ENCODE measurements at regions of chr7 and their contacts with region 1.

Region 1: GRCh38 chr7:37448636-37449361 is at the start of gene ELMO1:
- DNase-seq: peak; percentile 61 to 88 (median 84)
- H3K4me3 ChIP-seq: peak within 1 kb of the TSS; percentile 65
- H3K4me3 Mint-ChIP-seq: peak within 1 kb of the TSS; percentile 92 to 99 (median 98)
- H3K27ac ChIP-seq: peak within 1 kb of the TSS; percentile 80
- H3K27ac Mint-ChIP-seq: peak within 1 kb of the TSS; percentile 96 to 100 (median 98)
- H3K4me1 ChIP-seq: peaks cover 31% of the 10 kb centered on the region
- H3K4me1 Mint-ChIP-seq: peaks cover 49 to 65% (median 50%) of the 10 kb centered on the region in 3 donors
- H3K27me3 ChIP-seq: no peaks in the 10 kb centered on the region
- H3K27me3 Mint-ChIP-seq: peaks cover 0 to 6% of the 10 kb centered on the region in 2 donors
- total RNA-seq, gene ELMO1: 66.2 to 74.4 TPM

Region 2: GRCh38 chr7:37284805-37285231 is 164.0 kb before region 1 on chr7:
- CTCF ChIA-PET with region 1: interaction called, 18 read pairs
- POLR2A ChIA-PET with region 1: interaction called, 6 read pairs
- DNase-seq: peak; percentile 13 to 56 (median 17)
- H3K4me3 ChIP-seq: no peak overlapping the region
- H3K4me3 Mint-ChIP-seq: no peak overlapping the region
- H3K27ac ChIP-seq: no peak overlapping the region
- H3K27ac Mint-ChIP-seq: peak overlapping the region in 7 of 8 donors; percentile 23 to 61 (median 40)
- H3K4me1 ChIP-seq: peaks cover 13% of the 10 kb centered on the region
- H3K4me1 Mint-ChIP-seq: peaks cover 39 to 60% (median 53%) of the 10 kb centered on the region in 3 donors
- H3K27me3 ChIP-seq: no peaks in the 10 kb centered on the region
- H3K27me3 Mint-ChIP-seq: peaks cover 0 to 3% of the 10 kb centered on the region in 2 donors

Region 3: DNA sequence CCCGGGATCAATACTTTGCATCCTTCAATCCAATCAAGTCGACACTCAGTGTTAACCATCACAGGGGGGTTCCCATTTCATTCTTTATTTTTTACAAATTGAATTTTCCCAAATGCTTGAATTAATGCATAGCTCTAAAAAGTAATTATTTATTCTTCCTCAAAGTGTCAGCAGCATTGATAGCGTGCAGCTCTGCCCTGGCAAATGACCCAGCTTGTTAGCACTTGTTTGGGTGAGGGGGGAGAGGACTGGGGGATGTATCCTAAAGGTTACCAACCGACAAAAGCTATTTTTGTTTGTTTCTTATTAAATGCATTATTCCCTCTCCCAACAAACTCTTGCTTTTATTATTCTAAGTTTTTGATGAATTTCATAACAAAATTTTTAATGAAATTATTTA is 26.8 kb after region 1 on chr7:
- CTCF ChIA-PET with region 1: interaction called, 4 read pairs
- POLR2A ChIA-PET with region 1: interaction called, 23 read pairs
- DNase-seq: no peak
- H3K4me3 ChIP-seq: no peak overlapping the region
- H3K4me3 Mint-ChIP-seq: no peak overlapping the region
- H3K27ac ChIP-seq: no peak overlapping the region
- H3K27ac Mint-ChIP-seq: peak overlapping the region in 1 of 8 donors; percentile 31
- H3K4me1 ChIP-seq: no peaks in the 10 kb centered on the region
- H3K4me1 Mint-ChIP-seq: no peaks in the 10 kb centered on the region
- H3K27me3 ChIP-seq: no peaks in the 10 kb centered on the region
- H3K27me3 Mint-ChIP-seq: peaks cover 10 to 57% of the 10 kb centered on the region in 2 donors

Region 4: GRCh38 chr7:37534893-37535610 is 86.3 kb after region 1 on chr7:
- CTCF ChIA-PET with region 1: no interaction called
- POLR2A ChIA-PET with region 1: no interaction called
- DNase-seq: no peak
- H3K4me3 ChIP-seq: no peak overlapping the region
- H3K4me3 Mint-ChIP-seq: no peak overlapping the region
- H3K27ac ChIP-seq: no peak overlapping the region
- H3K27ac Mint-ChIP-seq: no peak overlapping the region
- H3K4me1 ChIP-seq: no peaks in the 10 kb centered on the region
- H3K4me1 Mint-ChIP-seq: no peaks in the 10 kb centered on the region
- H3K27me3 ChIP-seq: no peaks in the 10 kb centered on the region
- H3K27me3 Mint-ChIP-seq: peaks cover 11 to 20% of the 10 kb centered on the region in 2 donors

Measured in CD8-positive, alpha-beta memory T cell (primary cell).